Posterior vena cava (tissue), 2 donors: ENCODE measurements at regions of chr5 and their contacts with region 1.

Region 1: GRCh38 chr5:178279725-178280438 is 47.3 kb upstream of the PHYKPL start:
- DNase-seq: peak; percentile 97

Region 2: GRCh38 chr5:178259623-178260536 is 20.0 kb before region 1 on chr5:
- intact Hi-C with region 1: no loop called
- DNase-seq: no peak

Region 3: DNA sequence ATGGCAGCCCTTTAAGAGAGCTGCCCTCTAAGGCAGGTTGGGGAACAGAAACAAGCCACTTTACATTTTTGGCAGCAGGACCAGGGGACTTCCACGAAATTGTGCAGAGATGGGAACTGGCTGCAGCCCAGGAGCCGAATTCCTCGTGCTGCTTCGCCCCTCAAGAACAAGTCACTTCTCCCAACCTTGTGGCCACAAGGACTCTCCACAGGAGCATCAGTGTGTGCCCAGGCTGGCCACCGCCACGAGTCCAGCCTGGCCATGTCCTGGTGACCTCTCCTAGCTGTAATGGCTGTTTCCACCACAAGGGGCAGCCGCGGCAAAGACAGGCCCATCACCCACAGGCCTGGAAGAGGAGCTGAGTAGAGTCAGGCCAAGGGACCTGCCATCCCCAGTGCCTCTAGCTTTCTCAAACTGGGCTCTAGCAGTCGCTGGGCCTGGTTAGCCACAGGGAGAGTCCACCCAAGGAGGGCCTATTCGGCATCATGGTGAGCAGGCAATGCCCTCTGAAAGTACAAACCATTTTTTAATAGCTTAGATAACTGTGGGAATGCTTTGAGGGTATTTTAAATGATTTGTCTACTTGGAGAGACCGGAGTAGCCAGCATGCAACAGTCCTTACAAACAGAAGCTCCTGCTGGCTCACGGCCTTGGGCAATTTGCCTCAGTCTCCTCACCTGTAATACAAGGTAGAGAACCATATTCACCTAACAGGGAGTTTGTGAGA is 181.3 kb after region 1 on chr5:
- intact Hi-C with region 1: loop called in 1 of 2 experiments (anchors 10 kb)
- DNase-seq: peak; percentile 91

Region 4: GRCh38 chr5:178551059-178551458 is 271.2 kb after region 1 on chr5:
- intact Hi-C with region 1: loop called (anchors 5 kb)
- DNase-seq: no peak